ENCODE measurements at regions of chr5 and their contacts with region 1.

Region 1: DNA sequence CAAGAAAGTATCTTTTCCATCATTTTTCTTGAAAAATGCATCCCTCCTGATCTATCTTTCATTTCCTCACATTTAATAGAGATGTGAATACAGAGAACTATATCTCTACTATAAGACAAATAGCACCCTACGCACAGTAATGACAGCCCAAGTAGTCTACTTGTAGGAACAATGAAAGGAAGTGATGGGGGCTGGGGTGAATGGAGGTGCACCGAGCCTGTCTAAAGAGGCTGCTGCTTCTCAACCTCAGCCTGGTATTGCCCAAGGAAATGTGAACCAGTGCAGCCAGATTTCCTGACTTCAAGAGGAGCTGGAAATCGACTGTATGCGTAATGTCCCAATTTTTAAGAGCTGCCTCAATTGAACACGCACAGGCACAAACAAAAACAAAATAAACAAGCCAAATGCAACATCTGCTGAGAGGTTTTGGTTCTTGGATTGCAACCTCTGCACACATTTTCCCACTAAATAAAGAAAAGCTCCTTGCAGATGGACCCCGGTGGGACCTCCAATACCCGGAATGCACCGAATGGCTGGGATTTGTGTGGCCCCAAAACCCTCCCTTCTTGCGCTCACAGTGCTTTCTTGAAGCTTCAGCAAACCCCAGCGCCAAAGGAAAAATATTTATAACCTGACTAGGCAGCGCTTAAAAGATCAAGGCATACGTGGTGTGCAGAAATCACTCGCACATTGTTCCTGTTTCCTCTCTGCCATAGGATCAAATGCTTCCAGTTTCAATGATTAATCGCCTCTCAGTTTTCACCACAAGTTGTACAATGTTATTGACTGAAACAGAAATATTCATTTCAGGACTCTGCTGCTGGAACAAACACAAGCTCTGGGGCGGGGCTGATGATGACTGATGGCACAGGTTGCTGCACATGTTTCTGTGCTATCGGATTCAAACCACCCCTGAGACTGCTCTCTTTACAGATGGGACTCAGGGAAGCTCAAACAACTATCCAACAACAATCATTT is 68.3 kb downstream of the KCNIP1 start:
- DNase-seq: peak; percentile 94
- H3K4me3 Mint-ChIP-seq: no peak overlapping the region
- H3K27ac Mint-ChIP-seq: no peak overlapping the region
- H3K4me1 Mint-ChIP-seq: peaks cover 20% of the 10 kb centered on the region
- H3K27me3 Mint-ChIP-seq: peaks cover 63% of the 10 kb centered on the region

Region 2: GRCh38 chr5:168836603-168837231 is 1735.4 kb before region 1 on chr5:
- CTCF ChIA-PET with region 1: no interaction called
- intact Hi-C with region 1: loop called (anchors 2 kb)
- DNase-seq: peak; percentile 53
- H3K4me3 Mint-ChIP-seq: peak overlapping the region; percentile 46
- H3K27ac Mint-ChIP-seq: peak overlapping the region; percentile 73
- H3K4me1 Mint-ChIP-seq: peaks cover 31% of the 10 kb centered on the region
- H3K27me3 Mint-ChIP-seq: peaks cover 18% of the 10 kb centered on the region

Region 3: DNA sequence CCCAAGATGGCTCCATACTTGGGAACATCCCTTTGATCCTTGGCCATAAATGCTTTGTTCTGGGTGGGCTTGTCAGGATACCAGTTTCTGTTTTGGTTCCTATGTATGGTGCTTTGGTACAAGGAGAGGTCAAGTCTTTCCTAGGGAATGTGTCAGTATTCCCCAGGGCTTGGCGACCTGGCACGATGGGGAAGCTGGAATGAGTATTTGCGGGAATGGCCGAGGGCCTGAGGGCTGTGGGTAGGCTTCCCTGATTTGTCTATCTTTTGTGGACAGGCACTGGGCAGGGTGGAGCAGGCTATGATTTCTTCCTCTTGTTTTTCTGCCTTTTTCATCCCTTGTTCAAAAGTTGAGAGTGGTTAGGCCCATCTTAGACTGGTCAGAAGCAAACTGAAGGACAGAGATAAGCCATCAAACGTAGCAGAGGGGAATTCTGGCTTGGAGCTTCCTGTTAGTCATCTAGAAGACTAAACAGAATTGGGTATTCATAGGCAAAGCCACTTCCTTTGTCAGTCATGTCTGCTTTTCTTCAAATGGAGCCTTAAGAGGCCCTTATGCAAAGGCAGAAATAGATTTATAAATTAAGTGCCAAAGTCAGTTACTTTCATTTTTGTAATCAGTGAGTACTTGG is 921.3 kb before region 1 on chr5:
- CTCF ChIA-PET with region 1: no interaction called
- intact Hi-C with region 1: loop called (anchors 1 kb)
- DNase-seq: peak; percentile 64
- H3K4me3 Mint-ChIP-seq: peak overlapping the region; percentile 49
- H3K27ac Mint-ChIP-seq: peak overlapping the region; percentile 94
- H3K4me1 Mint-ChIP-seq: peaks cover 92% of the 10 kb centered on the region
- H3K27me3 Mint-ChIP-seq: no peaks in the 10 kb centered on the region

Region 4: DNA sequence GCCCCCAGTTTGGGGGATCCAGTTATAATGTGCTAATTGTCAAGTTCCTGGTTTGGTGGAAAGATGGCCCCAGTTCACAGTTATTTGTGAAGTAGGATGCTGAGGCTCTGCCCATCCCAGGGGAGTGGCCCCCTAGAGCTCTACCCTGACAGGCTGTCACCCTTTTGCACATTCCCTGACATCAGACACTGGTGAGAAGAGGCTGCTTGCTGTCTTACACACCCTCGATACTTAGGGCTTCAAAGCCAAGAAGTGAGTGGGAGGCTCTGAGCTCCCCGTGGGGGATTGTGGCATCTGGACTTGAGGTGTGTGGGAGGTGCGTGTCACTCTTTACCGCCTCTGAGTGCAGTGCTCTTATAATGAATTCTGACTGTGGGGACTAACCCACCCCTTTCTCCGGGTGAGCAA is 766.6 kb before region 1 on chr5:
- CTCF ChIA-PET with region 1: no interaction called
- intact Hi-C with region 1: loop called (anchors 1 kb)
- DNase-seq: peak; percentile 81
- H3K4me3 Mint-ChIP-seq: peak overlapping the region; percentile 1
- H3K27ac Mint-ChIP-seq: peak overlapping the region; percentile 92
- H3K4me1 Mint-ChIP-seq: peaks cover 38% of the 10 kb centered on the region
- H3K27me3 Mint-ChIP-seq: no peaks in the 10 kb centered on the region

Region 5: DNA sequence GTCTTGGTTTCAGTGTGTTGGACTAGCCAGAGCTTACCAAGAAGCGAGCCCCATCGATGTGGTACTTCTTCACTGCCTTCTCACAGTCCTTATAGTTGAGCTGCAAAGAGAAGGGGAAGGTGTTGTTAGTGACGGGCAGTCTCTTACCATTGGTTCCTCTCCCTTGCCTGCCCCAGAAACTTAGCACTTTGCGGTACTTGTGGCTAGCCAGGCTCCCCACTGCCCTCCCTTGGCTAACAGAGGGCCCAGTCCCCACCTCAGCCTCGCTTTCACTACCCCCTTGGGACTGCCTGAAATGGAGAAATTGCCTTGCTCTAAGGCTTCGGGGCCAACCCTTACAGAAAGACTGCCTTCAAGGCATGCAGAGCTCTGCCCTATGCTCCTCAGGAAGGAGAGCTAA is 278.9 kb before region 1 on chr5:
- CTCF ChIA-PET with region 1: no interaction called
- intact Hi-C with region 1: loop called (anchors 1 kb)
- DNase-seq: peak; percentile 66
- H3K4me3 Mint-ChIP-seq: peak overlapping the region; percentile 95
- H3K27ac Mint-ChIP-seq: peak overlapping the region; percentile 98
- H3K4me1 Mint-ChIP-seq: peaks cover 69% of the 10 kb centered on the region
- H3K27me3 Mint-ChIP-seq: no peaks in the 10 kb centered on the region

Region 6: DNA sequence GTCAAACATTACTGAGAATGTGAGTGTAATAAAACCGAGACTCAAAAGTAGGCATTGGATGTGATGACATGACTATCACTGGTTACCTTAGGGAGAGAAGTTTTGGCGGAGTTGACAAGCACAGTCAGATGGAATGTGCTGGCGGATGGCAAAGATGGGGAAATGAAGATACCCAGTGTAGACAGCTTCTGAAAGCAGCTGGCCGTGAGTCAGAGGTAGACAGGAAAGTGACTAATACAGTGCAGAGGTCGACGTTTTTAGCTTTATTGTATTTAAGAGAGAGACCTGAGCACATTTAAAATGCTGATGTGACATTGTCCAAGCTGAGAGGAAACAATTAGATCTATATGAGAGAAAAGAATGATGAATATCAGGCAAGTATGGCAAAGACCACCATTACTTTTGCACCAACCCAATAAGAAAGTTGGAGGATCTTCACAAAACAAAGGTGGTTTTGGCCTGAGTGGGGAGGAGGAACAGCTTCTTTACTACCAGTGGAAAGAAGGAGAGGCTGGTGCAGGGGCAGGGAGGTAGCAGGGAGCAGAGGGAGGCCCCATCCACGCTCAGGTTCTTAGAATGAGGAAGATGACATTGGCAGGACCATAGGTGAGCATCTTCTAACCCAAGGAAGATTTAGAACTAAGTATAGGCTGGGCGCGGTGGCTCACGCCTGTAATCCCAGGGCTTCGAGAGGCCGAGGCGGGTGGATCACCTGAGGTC is 105.0 kb before region 1 on chr5:
- CTCF ChIA-PET with region 1: no interaction called
- intact Hi-C with region 1: loop called (anchors 1 kb)
- DNase-seq: peak; percentile 77
- H3K4me3 Mint-ChIP-seq: no peak overlapping the region
- H3K27ac Mint-ChIP-seq: no peak overlapping the region
- H3K4me1 Mint-ChIP-seq: no peaks in the 10 kb centered on the region
- H3K27me3 Mint-ChIP-seq: peaks cover 12% of the 10 kb centered on the region

Region 7: DNA sequence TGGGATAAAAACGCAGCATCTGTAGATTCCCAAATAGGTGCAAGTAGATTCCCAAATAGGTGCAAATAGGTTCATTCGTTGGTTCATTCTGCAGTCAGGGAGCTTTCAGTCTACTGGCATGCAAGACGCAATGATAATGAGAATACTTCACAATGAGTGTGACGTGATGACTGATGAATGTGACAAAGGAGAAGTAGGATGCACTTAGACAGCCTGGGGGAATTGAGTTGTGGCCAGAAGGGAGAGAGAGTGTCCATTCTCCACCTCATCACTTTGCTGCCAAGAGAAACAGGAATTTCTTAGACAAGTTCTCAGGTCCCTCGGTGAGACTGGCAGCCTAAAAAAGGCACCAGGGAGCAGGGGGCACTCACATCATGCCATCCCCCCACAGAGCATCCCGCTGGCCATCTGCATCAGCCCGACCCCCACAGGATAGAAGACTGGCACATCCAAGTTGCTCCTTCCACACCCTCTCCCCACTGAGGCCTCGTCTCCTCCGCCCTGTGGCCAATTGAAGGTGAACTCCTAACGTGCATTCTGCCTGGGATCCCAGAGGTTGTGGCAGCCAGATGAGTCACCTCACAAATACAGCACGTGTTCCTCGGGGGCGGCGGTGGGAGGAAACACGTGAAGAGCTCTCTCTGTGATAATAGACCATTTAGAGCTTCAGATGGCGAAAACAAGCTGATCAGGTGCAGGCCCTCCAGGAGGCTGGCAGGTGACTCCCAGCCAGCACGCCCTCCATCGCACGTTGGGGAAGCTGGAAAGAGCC is 88.3 kb before region 1 on chr5:
- CTCF ChIA-PET with region 1: no interaction called
- intact Hi-C with region 1: no loop called
- DNase-seq: peak; percentile 10
- H3K4me3 Mint-ChIP-seq: no peak overlapping the region
- H3K27ac Mint-ChIP-seq: no peak overlapping the region
- H3K4me1 Mint-ChIP-seq: no peaks in the 10 kb centered on the region
- H3K27me3 Mint-ChIP-seq: peaks cover 10% of the 10 kb centered on the region

Region 8: DNA sequence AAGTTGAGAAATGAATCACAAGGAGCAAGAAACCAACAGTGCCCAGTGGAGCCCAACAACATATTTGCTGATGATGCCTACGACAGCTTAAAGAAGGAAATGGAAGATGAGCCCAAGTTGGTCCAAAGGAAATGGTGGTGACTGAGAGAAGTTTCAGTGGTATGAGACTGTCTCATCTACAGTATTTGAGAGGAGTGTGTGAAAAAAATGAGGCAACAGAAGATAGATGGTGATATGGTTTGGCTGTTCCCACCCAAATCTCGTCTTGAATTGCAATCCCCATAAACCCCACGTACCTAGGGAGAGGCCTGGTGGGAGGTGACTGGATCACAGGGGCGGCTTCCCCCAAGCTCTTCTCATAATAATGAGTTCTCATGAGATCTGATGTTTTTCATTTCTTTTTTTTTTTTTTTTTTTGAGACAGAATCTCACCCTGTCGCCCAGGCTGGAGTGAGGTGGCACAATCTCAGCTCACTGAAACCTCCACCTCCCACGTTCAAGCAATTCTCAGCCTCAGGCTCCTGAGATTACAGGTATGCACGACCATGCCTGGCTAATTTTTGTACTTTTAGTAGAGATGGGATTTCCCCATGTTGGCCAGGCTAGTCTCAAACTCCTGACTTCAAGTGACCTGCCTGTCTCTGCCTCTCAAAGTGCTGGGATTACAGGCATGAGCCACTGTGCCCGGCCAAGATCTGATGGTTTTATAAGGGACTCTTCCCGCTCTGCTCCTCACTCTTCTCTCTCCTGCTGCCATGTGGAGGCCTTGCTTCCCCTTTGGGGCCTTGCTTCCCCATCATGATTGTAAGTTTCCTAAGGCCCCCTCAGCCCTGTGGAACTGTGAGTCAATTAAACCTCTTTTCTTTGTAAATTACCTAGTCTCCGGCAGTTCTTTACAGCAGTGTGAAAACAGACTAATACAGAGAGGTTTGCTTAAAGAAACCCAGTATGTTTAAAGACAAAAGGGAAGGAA is 1652.0 kb after region 1 on chr5:
- CTCF ChIA-PET with region 1: no interaction called
- intact Hi-C with region 1: loop called (anchors 10 kb)
- DNase-seq: peak; percentile 70
- H3K4me3 Mint-ChIP-seq: peak overlapping the region; percentile 11
- H3K27ac Mint-ChIP-seq: peak overlapping the region; percentile 37
- H3K4me1 Mint-ChIP-seq: peaks cover 30% of the 10 kb centered on the region
- H3K27me3 Mint-ChIP-seq: no peaks in the 10 kb centered on the region